Activated CD4-positive, alpha-beta T cell treated with anti-CD3 and anti-CD28 coated beads, Interleukin-2, amount 10 ng/mL, durations not matched to agents 24 days and 14 days (primary cell): ENCODE measurements at regions of chr11 and their contacts with region 1.

Region 1: DNA sequence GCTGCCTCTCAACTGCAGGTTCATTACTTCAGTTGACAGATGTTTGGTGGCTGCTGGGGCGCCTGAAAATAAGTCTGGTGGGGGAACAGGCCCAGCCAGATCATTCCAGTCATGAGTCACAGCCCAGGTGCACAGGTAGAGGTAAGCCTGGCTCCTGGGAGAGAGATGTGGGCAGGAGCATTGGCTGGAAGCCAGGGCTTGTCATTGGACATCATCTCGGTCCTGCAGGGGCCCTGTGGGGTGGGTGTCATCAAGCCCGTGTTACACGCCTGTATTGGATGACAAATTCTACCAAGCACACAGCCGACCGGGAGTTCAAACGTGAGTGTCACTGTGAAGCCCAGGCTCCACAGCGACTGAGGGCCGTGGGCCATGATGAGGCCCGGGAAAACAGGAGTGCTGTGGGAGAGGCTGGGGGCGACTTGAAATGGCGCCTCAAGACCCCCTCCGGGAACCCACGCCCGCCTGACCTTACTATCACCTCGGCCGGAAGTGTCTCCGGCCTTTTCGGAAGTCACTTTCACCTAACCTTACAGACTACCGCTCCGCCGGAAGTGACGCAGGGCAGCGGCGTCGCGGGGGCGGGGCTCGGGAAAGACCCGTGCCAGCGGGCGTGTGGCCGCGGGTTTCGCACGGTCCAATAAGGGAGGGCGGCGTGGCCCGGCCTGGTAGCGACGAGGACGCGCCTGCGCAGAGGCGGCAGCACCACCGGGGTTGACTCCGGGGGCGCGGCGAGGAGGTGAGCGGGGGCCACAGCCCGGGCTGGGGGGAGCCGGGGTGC is at the start of gene FKBP2:
- DNase-seq: peak; percentile 100
- H3K4me3 Mint-ChIP-seq: peak within 1 kb of the TSS; percentile 95
- H3K27ac Mint-ChIP-seq: peak within 1 kb of the TSS; percentile 97
- H3K4me1 Mint-ChIP-seq: peaks cover 40% of the 10 kb centered on the region
- H3K27me3 Mint-ChIP-seq: no peaks in the 10 kb centered on the region
- total RNA-seq, gene FKBP2: 28.8 and 30.6 TPM in 2 replicates

Region 2: GRCh38 chr11:62601394-62602140 is 1639.0 kb before region 1 on chr11 and contains the start of gene MTA2:
- intact Hi-C with region 1: loop called (anchors 10 kb)
- DNase-seq: peak; percentile 100
- H3K4me3 Mint-ChIP-seq: peak within 1 kb of the TSS; percentile 95
- H3K27ac Mint-ChIP-seq: peak within 1 kb of the TSS; percentile 88
- H3K4me1 Mint-ChIP-seq: peaks cover 44% of the 10 kb centered on the region
- H3K27me3 Mint-ChIP-seq: no peaks in the 10 kb centered on the region
- total RNA-seq, gene MTA2: 219 and 220 TPM in 2 replicates

Region 3: GRCh38 chr11:64185816-64186498 is 54.6 kb before region 1 on chr11 and contains the start of gene STIP1:
- intact Hi-C with region 1: loop called (anchors 2 kb)
- DNase-seq: peak; percentile 99
- H3K4me3 Mint-ChIP-seq: no peak within 1 kb of the TSS
- H3K27ac Mint-ChIP-seq: peak within 1 kb of the TSS; percentile 98
- H3K4me1 Mint-ChIP-seq: peaks cover 31% of the 10 kb centered on the region
- H3K27me3 Mint-ChIP-seq: peaks cover 4% of the 10 kb centered on the region
- total RNA-seq, gene STIP1: 521 and 535 TPM in 2 replicates

Region 4: DNA sequence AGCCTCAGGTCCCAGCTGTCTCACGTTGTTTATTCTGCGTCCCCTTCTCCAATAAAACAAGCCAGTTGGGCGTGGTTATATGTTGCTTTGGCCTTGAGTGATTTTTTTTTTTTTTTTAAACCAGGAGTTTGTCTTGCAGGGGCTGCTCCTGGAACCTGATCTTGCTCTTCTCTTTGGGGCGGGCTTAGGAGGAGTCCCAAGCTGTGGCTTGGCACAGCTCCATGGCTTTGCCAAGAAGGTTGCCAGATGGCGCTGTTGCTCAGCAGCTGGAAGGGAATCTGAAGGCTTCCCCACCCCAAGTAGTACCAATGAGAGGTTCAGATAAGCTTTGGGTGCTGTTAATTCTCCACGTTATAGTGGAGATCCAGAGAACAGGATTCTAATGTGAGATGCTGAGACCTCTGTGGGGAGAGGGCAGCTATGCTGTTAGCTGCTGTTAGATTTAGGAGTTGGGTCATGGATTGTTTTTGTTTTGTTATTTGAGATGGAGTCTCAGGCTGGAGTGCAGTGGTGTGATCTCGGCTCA is 36.1 kb before region 1 on chr11:
- intact Hi-C with region 1: loop called (anchors 2 kb)
- DNase-seq: peak; percentile 93
- H3K4me3 Mint-ChIP-seq: peak overlapping the region; percentile 69
- H3K27ac Mint-ChIP-seq: peak overlapping the region; percentile 80
- H3K4me1 Mint-ChIP-seq: peaks cover 33% of the 10 kb centered on the region
- H3K27me3 Mint-ChIP-seq: no peaks in the 10 kb centered on the region

Region 5: GRCh38 chr11:64225612-64226506 is 14.7 kb before region 1 on chr11 and contains the starts of genes NUDT22 and TRPT1:
- intact Hi-C with region 1: loop called (anchors 1 kb)
- DNase-seq: peak; percentile 99
- H3K4me3 Mint-ChIP-seq: peak within 1 kb of the TSS; percentile 91
- H3K27ac Mint-ChIP-seq: peak within 1 kb of the TSS; percentile 86
- H3K4me1 Mint-ChIP-seq: peaks cover 27% of the 10 kb centered on the region
- H3K27me3 Mint-ChIP-seq: no peaks in the 10 kb centered on the region
- total RNA-seq, gene NUDT22: 66.1 and 72.6 TPM in 2 replicates
- total RNA-seq, gene TRPT1: 29.8 and 31.7 TPM in 2 replicates

Region 6: GRCh38 chr11:64284048-64284961 is 43.7 kb after region 1 on chr11 and contains the start of gene BAD:
- intact Hi-C with region 1: loop called (anchors 2 kb)
- DNase-seq: peak; percentile 97
- H3K4me3 Mint-ChIP-seq: peak within 1 kb of the TSS; percentile 89
- H3K27ac Mint-ChIP-seq: peak within 1 kb of the TSS; percentile 94
- H3K4me1 Mint-ChIP-seq: peaks cover 17% of the 10 kb centered on the region
- H3K27me3 Mint-ChIP-seq: no peaks in the 10 kb centered on the region
- total RNA-seq, gene BAD: 34.0 and 35.5 TPM in 2 replicates